Ovary (tissue), 10 donors: ENCODE measurements at regions of chr1 and their contacts with region 1.

Region 1: DNA sequence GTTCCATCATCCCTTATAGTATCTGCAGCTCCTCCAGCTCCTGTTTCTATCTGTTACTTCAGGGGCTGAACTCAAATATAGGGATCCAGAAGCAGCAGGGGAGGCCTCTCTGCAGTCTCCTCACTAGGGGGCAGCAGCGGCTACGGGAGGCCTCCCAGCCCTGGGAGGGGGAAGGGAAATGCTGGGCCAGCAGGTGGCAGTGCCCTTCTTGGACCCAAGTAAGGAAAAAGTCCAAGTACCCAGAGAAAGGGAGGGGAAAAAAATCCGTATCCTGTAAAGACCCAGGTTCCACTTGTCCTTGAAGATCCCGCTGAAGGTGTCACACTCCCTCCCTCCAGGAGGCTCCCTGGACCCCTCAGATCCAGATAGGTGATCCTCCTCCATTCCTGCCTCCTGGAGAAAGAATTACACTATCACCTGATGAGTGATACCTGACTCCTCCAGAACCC is 14.1 kb upstream of the NUAK2 start:
- DNase-seq: peak; percentile 85 to 91 (median 86)
- H3K4me3 ChIP-seq: no peak overlapping the region
- H3K27ac ChIP-seq: no peak overlapping the region
- H3K4me1 ChIP-seq: peaks cover 5% of the 10 kb centered on the region
- H3K27me3 ChIP-seq: no peaks in the 10 kb centered on the region
- CTCF ChIP-seq: peak; percentile 91 to 95 (median 92)
- EP300 ChIP-seq: no peak
- POLR2A ChIP-seq: no peak

Region 2: GRCh38 chr1:205430696-205431305 is 95.1 kb after region 1 on chr1:
- intact Hi-C with region 1: loop called in 1 of 4 experiments (anchors 5 kb)
- DNase-seq: peak; percentile 60 to 84 (median 79)
- H3K4me3 ChIP-seq: peak overlapping the region; percentile 46
- H3K27ac ChIP-seq: no peak overlapping the region
- H3K4me1 ChIP-seq: no peaks in the 10 kb centered on the region
- H3K27me3 ChIP-seq: no peaks in the 10 kb centered on the region
- CTCF ChIP-seq: peak; percentile 70 to 87 (median 86)
- EP300 ChIP-seq: no peak
- POLR2A ChIP-seq: no peak

Region 3: DNA sequence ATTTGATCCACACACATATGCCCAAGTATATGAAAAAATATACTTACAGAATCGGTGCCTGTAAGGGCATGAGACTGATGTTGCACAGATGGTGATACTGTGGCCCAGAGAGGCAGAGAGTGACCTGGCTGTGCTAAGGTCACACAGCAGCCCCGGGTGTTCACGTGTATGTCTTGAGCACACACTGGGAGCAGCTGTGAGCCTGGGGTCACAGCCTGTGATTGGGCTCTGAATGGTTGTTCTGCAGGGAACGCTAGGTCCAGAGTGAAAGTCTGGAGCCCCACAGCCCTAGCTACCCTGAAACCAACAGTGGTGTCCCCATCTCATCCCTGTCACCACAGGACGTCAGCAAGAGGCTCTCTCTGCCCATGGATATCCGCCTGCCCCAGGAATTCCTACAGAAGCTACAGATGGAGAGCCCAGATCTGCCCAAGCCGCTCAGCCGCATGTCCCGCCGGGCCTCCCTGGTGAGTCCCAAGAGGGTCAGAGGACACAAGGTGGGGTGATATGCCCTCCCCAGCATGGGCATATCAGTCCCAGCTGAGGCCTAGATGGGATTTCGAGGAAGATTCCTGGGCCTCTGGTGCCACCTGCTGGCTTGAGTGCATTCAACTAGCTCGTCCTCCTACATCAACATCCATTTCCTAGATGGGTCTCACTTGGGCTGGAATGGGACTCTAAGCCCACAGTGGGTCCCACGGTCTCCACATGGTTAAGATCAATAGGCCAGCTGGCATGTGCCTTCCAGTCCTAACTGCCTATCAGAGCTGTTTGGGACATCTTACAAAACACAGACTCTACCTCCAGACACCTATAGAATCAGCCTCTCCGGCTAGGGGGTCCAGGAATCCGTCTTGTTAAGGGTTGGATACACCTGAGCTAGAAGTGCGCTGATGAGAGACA is 188.5 kb after region 1 on chr1:
- intact Hi-C with region 1: loop called in 2 of 4 experiments (anchors 5 to 10 kb)
- DNase-seq: peak; percentile 76 to 91 (median 87)
- H3K4me3 ChIP-seq: no peak overlapping the region
- H3K27ac ChIP-seq: no peak overlapping the region
- H3K4me1 ChIP-seq: peaks cover 7% of the 10 kb centered on the region
- H3K27me3 ChIP-seq: no peaks in the 10 kb centered on the region
- CTCF ChIP-seq: peak; percentile 66 to 86 (median 80)
- EP300 ChIP-seq: no peak
- POLR2A ChIP-seq: no peak